ENCODE measurements at regions of chr2 and their contacts with region 1.

Region 1: GRCh38 chr2:25301453-25302352 is 40.0 kb downstream of the DNMT3A start:
- DNase-seq: peak; percentile 75 to 92 (median 92)
- H3K4me3 ChIP-seq: peak overlapping the region in 1 of 7 experiments; percentile 4
- H3K27ac ChIP-seq: no peak overlapping the region
- H3K4me1 ChIP-seq: peaks cover 3 to 47% (median 17%) of the 10 kb centered on the region in 4 experiments
- H3K27me3 ChIP-seq: no peaks in the 10 kb centered on the region

Region 2: GRCh38 chr2:24643051-24643450 is 658.7 kb before region 1 on chr2:
- CTCF ChIA-PET with region 1: no interaction called
- POLR2A ChIA-PET with region 1: no interaction called
- DNase-seq: no peak
- H3K4me3 ChIP-seq: no peak overlapping the region
- H3K27ac ChIP-seq: no peak overlapping the region
- H3K4me1 ChIP-seq: no peaks in the 10 kb centered on the region
- H3K27me3 ChIP-seq: no peaks in the 10 kb centered on the region

Region 3: GRCh38 chr2:24993406-24994145 is 308.1 kb before region 1 on chr2:
- CTCF ChIA-PET with region 1: no interaction called
- POLR2A ChIA-PET with region 1: no interaction called
- DNase-seq: peak in 1 of 3 donors; percentile 21
- H3K4me3 ChIP-seq: no peak overlapping the region
- H3K27ac ChIP-seq: no peak overlapping the region
- H3K4me1 ChIP-seq: peaks cover 0 to 5% (median 0%) of the 10 kb centered on the region in 4 experiments
- H3K27me3 ChIP-seq: no peaks in the 10 kb centered on the region

Region 4: DNA sequence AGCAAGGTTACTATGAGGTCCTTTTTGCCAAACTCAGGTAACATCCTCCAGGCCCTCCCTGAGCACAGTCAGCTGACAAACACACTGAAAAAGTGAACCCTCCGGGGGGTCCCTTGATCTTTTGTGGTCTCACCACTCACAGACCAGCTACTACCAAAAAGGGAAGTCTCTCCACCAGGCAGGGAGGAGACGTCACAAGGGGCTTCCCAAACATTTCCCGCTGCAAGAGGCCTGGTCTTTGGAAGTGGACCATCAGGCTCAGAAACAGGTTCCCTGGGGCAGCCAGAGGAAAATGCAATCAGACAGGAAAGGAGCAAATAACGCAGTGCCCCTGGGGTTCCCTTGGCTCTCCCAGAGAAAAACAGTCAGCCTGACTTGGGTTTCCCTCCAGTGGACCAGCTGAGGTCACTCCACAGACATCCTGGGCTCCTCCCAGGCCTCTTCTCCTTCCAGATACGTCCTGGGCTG is 94.6 kb before region 1 on chr2:
- CTCF ChIA-PET with region 1: no interaction called
- POLR2A ChIA-PET with region 1: no interaction called
- DNase-seq: peak; percentile 80 to 95 (median 94)
- H3K4me3 ChIP-seq: no peak overlapping the region
- H3K27ac ChIP-seq: no peak overlapping the region
- H3K4me1 ChIP-seq: peaks cover 4 to 61% (median 50%) of the 10 kb centered on the region in 4 experiments
- H3K27me3 ChIP-seq: no peaks in the 10 kb centered on the region

Region 5: GRCh38 chr2:25276569-25277465 is 24.9 kb before region 1 on chr2:
- CTCF ChIA-PET with region 1: interaction called, 112 read pairs
- POLR2A ChIA-PET with region 1: interaction called, 3 read pairs
- DNase-seq: peak; percentile 71 to 86 (median 82)
- H3K4me3 ChIP-seq: peak overlapping the region in 5 of 7 experiments; percentile 6 to 58 (median 56)
- H3K27ac ChIP-seq: peak overlapping the region; percentile 75 to 83
- H3K4me1 ChIP-seq: peaks cover 22 to 79% (median 75%) of the 10 kb centered on the region in 4 experiments
- H3K27me3 ChIP-seq: no peaks in the 10 kb centered on the region

Region 6: DNA sequence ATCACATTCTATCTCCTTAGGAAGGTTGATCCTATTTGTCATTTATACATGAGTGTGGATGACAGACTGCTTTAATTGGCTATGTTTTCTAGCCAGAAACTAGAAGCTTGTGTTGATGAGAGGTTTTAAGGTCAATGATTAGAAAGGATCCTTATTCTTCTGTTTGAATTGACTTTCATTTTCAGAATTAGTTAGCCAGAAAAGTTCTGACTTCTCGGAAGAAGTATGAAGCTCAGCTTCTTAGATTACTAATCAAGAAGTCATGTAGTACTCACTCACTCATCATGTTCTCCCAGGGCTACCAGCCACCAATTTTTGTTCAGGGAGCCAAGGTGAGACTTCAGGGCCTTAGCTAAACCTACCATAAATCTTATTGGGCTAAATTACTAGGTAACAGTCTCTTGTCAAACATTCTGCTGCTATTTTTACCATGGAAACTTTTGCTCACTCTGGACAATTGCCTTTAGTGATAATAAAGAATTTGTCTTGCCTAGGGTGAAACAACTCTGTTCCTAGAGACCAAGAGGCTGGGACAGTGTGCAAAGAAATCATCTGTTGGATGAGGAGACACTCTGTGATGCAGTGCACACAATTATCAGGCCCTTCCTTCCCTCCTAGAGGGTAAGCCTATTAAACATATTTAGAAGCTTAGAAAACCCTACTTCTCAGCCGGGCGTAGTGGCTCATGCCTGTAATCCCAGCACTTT is 151.6 kb after region 1 on chr2:
- CTCF ChIA-PET with region 1: no interaction called
- POLR2A ChIA-PET with region 1: no interaction called
- DNase-seq: no peak
- H3K4me3 ChIP-seq: no peak overlapping the region
- H3K27ac ChIP-seq: no peak overlapping the region
- H3K4me1 ChIP-seq: no peaks in the 10 kb centered on the region
- H3K27me3 ChIP-seq: no peaks in the 10 kb centered on the region